Prostate gland (tissue), 2 donors: ENCODE measurements at regions of chr13 and their contacts with region 1.

Region 1: DNA sequence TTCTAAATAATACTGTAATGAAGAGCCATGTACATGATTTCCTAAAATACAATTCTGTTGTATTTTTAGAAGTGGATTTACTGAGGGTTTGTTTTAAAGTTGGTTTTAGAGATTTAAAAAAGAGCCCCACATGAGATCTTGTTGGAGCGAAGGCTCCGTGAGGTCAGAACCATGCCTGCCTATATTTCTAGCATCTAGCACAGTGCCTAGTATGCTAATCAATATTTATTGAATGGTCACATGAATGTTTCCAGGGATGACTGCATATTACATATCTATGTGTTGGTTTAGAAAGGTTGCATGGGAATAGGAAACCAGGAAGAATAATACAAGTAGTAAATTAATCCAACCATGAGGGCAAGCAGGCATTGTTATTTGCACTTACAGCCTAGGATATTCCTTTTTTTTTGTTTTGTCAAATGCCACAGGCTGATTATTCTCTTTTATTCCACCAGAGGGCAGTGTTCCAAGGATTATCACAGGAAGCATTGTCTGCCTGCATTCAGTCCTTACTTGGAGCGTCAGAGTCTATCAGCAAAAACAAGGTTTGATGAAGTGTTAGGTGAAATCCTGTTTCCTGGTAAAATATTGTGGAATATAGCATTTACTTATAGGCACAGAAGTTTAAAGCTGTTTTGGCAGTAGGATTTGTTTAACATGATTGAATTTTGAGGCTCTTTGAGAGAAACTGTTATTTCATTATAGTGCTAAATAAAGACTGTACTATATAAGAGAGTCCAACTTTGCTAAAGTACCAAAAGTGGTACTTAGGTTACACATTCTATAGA is 46.8 kb downstream of the COG3 start:
- DNase-seq: peak; percentile 34
- H3K4me3 ChIP-seq: no peak overlapping the region
- H3K27ac ChIP-seq: no peak overlapping the region
- H3K4me1 ChIP-seq: no peaks in the 10 kb centered on the region
- H3K27me3 ChIP-seq: no peaks in the 10 kb centered on the region
- CTCF ChIP-seq: peak; percentile 73 to 84 (median 80)
- POLR2A ChIP-seq: no peak

Region 2: DNA sequence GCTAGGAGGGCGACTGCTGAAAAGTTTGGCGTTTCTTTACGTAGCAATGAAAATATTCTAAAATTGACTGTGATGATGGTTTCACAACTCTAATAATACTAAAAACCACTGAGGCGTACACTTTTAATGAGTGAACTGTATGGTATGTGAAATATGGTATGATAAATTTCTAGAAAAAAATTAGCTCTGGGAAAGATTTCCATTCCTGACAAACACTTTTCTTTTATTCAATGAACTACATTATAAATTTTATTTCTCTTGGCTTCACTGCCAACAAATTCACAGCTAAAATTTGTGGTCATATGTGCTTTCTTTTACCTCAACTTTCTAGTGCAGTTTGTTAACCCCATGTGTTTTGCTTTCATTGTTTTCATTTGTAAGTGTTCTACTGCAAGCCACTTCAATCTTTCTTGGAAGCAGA is 529.9 kb after region 1 on chr13:
- intact Hi-C with region 1: no loop called
- DNase-seq: no peak
- H3K4me3 ChIP-seq: no peak overlapping the region
- H3K27ac ChIP-seq: no peak overlapping the region
- H3K4me1 ChIP-seq: no peaks in the 10 kb centered on the region
- H3K27me3 ChIP-seq: no peaks in the 10 kb centered on the region
- CTCF ChIP-seq: no peak
- POLR2A ChIP-seq: no peak

Region 3: GRCh38 chr13:46160471-46161066 is 649.1 kb after region 1 on chr13:
- intact Hi-C with region 1: loop called (anchors 2 kb)
- DNase-seq: no peak
- H3K4me3 ChIP-seq: no peak overlapping the region
- H3K27ac ChIP-seq: peak overlapping the region in 1 of 2 donors; percentile 12
- H3K4me1 ChIP-seq: peaks cover 9% of the 10 kb centered on the region
- H3K27me3 ChIP-seq: no peaks in the 10 kb centered on the region
- CTCF ChIP-seq: peak in 3 of 4 experiments; percentile 73 to 80 (median 79)
- POLR2A ChIP-seq: no peak